Sciatic nerve (tissue), 2 donors: ENCODE measurements at regions of chr17 and their contacts with region 1.

Region 1: GRCh38 chr17:81601525-81602120 is 35.3 kb downstream of the NPLOC4 start:
- DNase-seq: no peak
- ATAC-seq: peak; percentile 86

Region 2: DNA sequence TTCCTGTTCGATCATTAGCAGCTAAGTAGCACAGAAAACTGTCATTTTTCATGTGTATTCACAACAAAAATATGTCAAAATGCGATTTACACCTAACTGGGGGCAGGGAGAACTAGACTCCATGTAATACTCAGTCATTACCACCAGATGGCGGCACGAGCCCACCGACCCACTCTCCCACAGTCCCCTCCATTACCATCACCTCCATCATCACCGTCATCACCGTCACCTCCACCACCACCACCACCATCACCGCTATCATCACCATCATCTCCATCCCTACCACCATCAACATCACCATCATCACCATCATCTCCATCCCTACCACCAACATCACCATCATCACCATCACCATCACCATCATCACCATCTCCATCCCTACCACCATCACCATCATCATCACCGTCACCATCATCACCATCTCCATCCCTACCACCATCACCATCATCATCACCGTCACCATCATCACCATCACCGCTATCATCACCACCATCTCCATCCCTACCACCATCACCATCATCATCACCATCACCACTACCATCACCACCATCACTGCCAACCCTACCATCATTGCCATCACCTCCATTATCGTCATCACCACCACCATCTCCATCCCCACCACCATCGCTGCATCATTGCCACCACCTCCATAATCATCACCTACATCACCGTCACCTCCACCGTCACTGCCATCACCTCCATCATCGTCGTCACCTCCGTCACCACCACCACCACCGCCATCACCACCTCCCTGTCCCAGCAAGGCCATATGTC is 348.1 kb before region 1 on chr17:
- intact Hi-C with region 1: loop called (anchors 10 kb)
- DNase-seq: no peak
- ATAC-seq: peak; percentile 56

Region 3: DNA sequence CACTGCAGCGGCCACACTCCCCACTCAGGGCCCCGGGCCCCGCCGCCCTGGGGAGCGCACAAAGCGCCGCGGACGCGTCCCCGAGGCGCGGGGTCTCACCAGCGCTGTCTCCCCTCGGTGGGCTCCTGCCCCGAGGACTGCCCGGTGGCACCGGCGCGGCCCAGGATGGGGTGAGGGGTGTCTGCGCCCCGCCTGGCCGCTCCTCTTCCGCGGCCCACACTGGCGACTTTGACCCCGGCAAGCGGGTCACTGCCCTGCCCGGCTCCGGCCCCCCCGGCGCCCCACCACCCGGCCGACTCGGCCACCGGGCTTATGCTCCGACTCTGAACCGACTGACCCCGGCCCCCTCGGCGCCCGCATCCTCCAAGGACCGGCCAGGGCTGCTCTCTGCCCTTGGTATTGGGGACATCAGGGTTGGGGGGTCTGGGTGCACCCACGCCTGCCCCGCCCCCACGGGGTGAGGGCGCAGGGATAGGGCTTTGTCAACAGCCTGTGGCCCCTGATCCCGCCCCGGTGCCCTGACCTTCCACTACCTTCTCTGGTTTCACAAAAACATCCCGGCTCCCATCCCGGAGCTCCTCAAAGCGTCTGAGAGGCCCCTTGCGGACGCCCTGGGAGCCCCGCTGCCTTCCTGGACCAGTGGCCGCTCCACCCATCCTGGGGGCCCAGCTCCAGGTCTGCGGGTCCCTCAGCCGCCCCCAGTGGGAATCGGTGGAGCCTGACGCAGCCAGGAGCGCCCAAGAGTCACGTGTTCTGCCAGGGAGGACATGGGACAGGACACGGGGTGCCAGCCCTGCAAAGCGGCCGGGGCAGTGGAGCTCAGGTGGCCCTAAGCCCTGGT is 203.2 kb after region 1 on chr17:
- intact Hi-C with region 1: no loop called
- DNase-seq: no peak
- ATAC-seq: no peak